Endothelial cell of umbilical vein (primary cell): ENCODE measurements at regions of chr7 and their contacts with region 1.

Region 1: DNA sequence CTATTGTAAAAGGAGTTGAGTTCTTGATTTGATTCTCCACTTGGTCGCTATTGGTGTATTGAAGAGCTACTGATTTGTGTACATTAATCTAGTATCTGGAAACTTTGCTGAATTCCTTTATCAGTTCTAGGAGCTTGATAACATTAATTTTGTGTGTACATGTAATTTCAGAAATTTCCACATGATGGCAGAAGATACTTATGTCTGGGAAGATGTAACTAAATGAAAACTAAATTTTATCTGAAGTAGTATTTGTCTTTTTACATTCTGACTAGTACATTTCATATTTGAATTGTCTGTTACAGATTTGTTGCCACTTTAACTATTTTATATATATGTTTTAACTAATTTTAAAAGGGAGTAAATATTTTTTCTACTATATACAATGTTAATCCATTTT is 27.6 kb downstream of the SDHAF3 start:
- DNase-seq: peak; percentile 58
- H3K4me3 ChIP-seq: no peak overlapping the region
- H3K27ac ChIP-seq: no peak overlapping the region
- H3K4me1 ChIP-seq: no peaks in the 10 kb centered on the region
- H3K27me3 ChIP-seq: no peaks in the 10 kb centered on the region
- CTCF ChIP-seq: peak; percentile 14 to 16
- POLR2A ChIP-seq: no peak

Region 2: GRCh38 chr7:97174303-97174702 is 29.2 kb after region 1 on chr7:
- CTCF ChIA-PET with region 1: interaction called, 60 read pairs
- POLR2A ChIA-PET with region 1: no interaction called
- dilution Hi-C with region 1: no loop called
- intact Hi-C with region 1: loop called (anchors 1 kb)
- DNase-seq: peak; percentile 11
- H3K4me3 ChIP-seq: no peak overlapping the region
- H3K27ac ChIP-seq: no peak overlapping the region
- H3K4me1 ChIP-seq: peaks cover 7% of the 10 kb centered on the region
- H3K27me3 ChIP-seq: no peaks in the 10 kb centered on the region
- CTCF ChIP-seq: no peak
- POLR2A ChIP-seq: no peak

Region 3: GRCh38 chr7:97179454-97180104 is 34.5 kb after region 1 on chr7:
- CTCF ChIA-PET with region 1: interaction called, 60 read pairs
- POLR2A ChIA-PET with region 1: no interaction called
- dilution Hi-C with region 1: no loop called
- intact Hi-C with region 1: loop called (anchors 1 kb)
- DNase-seq: peak; percentile 56
- H3K4me3 ChIP-seq: no peak overlapping the region
- H3K27ac ChIP-seq: no peak overlapping the region
- H3K4me1 ChIP-seq: peaks cover 2% of the 10 kb centered on the region
- H3K27me3 ChIP-seq: no peaks in the 10 kb centered on the region
- CTCF ChIP-seq: peak; percentile 57 to 82
- POLR2A ChIP-seq: no peak

Region 4: DNA sequence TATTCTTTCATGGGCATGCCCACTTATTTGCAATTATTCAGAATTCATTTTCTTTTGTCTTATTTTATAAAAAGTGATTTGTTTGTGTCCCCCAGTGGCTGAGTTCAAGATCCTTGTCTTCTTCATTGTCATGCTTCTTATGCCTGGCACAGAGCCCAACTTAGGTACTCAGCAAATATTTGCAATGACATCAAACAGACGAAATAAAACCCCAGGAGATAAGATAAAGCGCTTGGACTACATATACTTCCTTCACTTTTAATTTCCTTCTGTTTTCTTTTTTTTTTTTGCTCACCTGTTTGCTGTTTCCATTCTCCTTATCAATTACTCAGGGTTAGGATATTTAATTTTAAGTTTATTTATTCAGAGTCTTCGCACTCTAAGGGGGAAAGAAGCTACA is 197.4 kb after region 1 on chr7:
- CTCF ChIA-PET with region 1: no interaction called
- POLR2A ChIA-PET with region 1: no interaction called
- dilution Hi-C with region 1: no loop called
- intact Hi-C with region 1: no loop called
- DNase-seq: no peak
- H3K4me3 ChIP-seq: no peak overlapping the region
- H3K27ac ChIP-seq: no peak overlapping the region
- H3K4me1 ChIP-seq: no peaks in the 10 kb centered on the region
- H3K27me3 ChIP-seq: no peaks in the 10 kb centered on the region
- CTCF ChIP-seq: no peak
- POLR2A ChIP-seq: no peak

Region 5: DNA sequence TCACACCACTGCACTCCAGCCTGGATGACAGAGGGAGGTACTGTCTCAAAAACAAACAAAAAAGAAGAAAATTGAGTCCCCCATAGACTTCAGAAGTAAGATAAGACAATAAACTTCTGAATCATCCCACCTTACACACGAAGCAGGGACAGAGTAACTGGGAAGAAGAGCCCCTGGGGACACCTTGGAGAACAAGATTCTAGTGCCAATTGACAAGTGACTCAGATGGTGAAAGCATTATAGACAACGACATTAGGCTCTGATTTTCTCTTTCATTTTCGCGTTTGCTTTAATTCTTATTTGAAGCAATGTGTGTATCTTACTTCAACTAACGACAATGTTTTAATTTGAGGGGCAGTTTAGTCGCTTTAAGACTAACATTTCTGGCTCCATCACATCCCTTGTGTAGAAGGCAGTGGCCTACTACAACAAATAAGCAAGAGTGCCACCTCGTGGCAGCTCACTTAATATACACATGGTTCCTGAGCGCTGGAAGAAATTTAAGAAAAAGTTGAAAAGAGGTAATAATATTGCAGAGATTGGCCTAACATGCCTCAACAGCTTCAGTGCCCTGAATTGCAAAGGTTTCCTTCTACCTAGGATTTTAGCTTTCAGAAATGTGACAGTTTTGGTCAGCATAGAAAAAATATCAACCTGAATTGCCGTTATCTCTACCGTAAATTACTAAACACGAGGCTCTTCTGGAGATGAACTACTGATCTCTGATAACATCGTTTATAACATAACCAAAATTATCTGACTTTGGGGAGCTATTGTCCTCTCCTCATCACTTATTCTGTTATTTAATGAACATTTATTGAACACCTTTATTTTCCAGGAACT is 690.4 kb after region 1 on chr7:
- CTCF ChIA-PET with region 1: interaction called, 53 read pairs
- POLR2A ChIA-PET with region 1: no interaction called
- dilution Hi-C with region 1: no loop called
- intact Hi-C with region 1: loop called (anchors 1 kb)
- DNase-seq: peak; percentile 66
- H3K4me3 ChIP-seq: no peak overlapping the region
- H3K27ac ChIP-seq: no peak overlapping the region
- H3K4me1 ChIP-seq: no peaks in the 10 kb centered on the region
- H3K27me3 ChIP-seq: peaks cover 1 to 8% of the 10 kb centered on the region in 2 experiments
- CTCF ChIP-seq: peak; percentile 53 to 58
- POLR2A ChIP-seq: no peak

Region 6: DNA sequence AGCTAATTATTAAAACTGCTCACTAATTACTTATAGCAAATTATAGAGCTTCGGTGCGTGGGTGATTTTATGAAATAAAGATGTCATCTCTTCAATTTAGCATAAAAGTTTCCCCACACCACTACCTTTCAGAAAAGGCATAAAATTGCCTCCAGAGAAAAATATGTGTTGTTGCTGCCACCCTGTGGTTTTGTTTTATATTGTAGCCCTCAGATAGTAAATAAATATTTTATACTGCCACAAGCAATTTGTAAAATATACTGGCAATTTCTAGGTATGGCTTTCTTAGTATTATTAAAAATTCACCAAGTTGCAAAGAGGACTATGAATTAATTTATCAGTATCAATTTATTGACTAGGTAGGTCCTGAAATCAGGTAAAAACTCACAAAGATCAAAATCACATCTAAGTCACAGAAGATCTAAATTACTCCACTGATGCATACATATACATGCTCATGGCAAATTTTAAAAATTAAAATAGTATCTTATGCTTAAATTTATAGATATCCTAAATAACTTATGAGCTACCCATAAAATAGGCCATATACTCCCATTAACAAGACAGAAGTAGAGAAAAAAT is 700.6 kb after region 1 on chr7:
- CTCF ChIA-PET with region 1: interaction called, 7 read pairs
- POLR2A ChIA-PET with region 1: no interaction called
- dilution Hi-C with region 1: no loop called
- intact Hi-C with region 1: loop called (anchors 2 kb)
- DNase-seq: peak; percentile 36
- H3K4me3 ChIP-seq: no peak overlapping the region
- H3K27ac ChIP-seq: no peak overlapping the region
- H3K4me1 ChIP-seq: no peaks in the 10 kb centered on the region
- H3K27me3 ChIP-seq: no peaks in the 10 kb centered on the region
- CTCF ChIP-seq: peak in 1 of 2 donors; percentile 20
- POLR2A ChIP-seq: no peak